H1 (cell line): ENCODE measurements at regions of chr14 and their contacts with region 1.

Region 1: GRCh38 chr14:94330857-94331256 is 7.7 kb upstream of the SERPINA6 start:
- DNase-seq: peak in 1 of 2 experiments; percentile 30
- H3K4me3 ChIP-seq: no peak overlapping the region
- H3K27ac ChIP-seq: no peak overlapping the region
- H3K4me1 ChIP-seq: no peaks in the 10 kb centered on the region
- H3K27me3 ChIP-seq: 0 out of 7 replicates have a peak, but pooled peaks cover 0 to 2% (median 0%) of the 10 kb centered on the region in 4 experiments
- CTCF ChIP-seq: no peak
- EP300 ChIP-seq: no peak
- POLR2A ChIP-seq: no peak
- RAD21 ChIP-seq: no peak

Region 2: GRCh38 chr14:94307410-94307992 is 23.4 kb before region 1 on chr14:
- CTCF ChIA-PET with region 1: interaction called, 13 read pairs
- POLR2A ChIA-PET with region 1: no interaction called
- DNase-seq: peak in 1 of 2 experiments; percentile 44
- H3K4me3 ChIP-seq: no peak overlapping the region
- H3K27ac ChIP-seq: no peak overlapping the region
- H3K4me1 ChIP-seq: no peaks in the 10 kb centered on the region
- H3K27me3 ChIP-seq: no peaks in the 10 kb centered on the region
- CTCF ChIP-seq: peak in 2 of 3 experiments; percentile 60 to 76; a peak in 3 of 4 replicates
- EP300 ChIP-seq: no peak
- POLR2A ChIP-seq: no peak
- RAD21 ChIP-seq: peak; percentile 83 to 84

Region 3: GRCh38 chr14:94360945-94361565 is 30.2 kb after region 1 on chr14:
- CTCF ChIA-PET with region 1: no interaction called
- POLR2A ChIA-PET with region 1: no interaction called
- DNase-seq: no peak
- H3K4me3 ChIP-seq: no peak overlapping the region
- H3K27ac ChIP-seq: no peak overlapping the region
- H3K4me1 ChIP-seq: peaks cover 0 to 4% (median 1%) of the 10 kb centered on the region in 4 experiments; a peak in 4 of 7 replicates
- H3K27me3 ChIP-seq: no peaks in the 10 kb centered on the region
- CTCF ChIP-seq: no peak
- EP300 ChIP-seq: no peak
- POLR2A ChIP-seq: no peak
- RAD21 ChIP-seq: no peak

Region 4: DNA sequence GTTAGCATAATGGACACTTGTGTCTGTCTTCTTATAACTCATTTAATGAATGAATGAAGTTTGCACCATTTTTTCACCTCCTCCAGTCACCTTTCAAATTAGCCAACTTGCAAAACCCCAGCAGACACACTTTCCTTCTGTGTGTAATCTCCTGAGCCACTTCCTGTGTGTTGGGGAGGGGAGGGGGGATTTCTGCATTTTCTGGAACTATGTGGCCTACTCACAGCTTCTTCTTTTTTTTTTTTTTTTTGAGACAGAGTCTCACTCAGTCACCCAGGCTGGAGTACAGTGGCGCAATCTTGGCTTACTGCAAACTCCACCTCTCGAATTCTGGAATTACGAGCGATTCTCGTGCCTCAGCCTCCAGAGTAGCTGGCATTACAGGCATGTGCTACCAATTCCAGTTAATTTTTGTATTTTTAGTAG is 61.7 kb after region 1 on chr14:
- CTCF ChIA-PET with region 1: no interaction called
- POLR2A ChIA-PET with region 1: no interaction called
- DNase-seq: no peak
- H3K4me3 ChIP-seq: no peak overlapping the region
- H3K27ac ChIP-seq: no peak overlapping the region
- H3K4me1 ChIP-seq: peaks cover 5 to 27% (median 13%) of the 10 kb centered on the region in 4 experiments; a peak in 6 of 7 replicates
- H3K27me3 ChIP-seq: no peaks in the 10 kb centered on the region; a peak in 1 of 7 replicates
- CTCF ChIP-seq: no peak
- EP300 ChIP-seq: no peak
- POLR2A ChIP-seq: no peak
- RAD21 ChIP-seq: no peak